T-cell (primary cell): ENCODE measurements at regions of chr17 and their contacts with region 1.

Region 1: GRCh38 chr17:42997984-42998938 is at the start of gene RPL27:
- DNase-seq: peak; percentile 94 to 100 (median 98)
- ATAC-seq: peak; percentile 94 to 97 (median 95)
- H3K4me3 ChIP-seq: peak within 1 kb of the TSS; percentile 72 to 80
- H3K4me3 Mint-ChIP-seq: peak within 1 kb of the TSS; percentile 90 to 97 (median 92)
- H3K27ac ChIP-seq: peak within 1 kb of the TSS; percentile 94
- H3K27ac Mint-ChIP-seq: peak within 1 kb of the TSS; percentile 88 to 98
- H3K4me1 ChIP-seq: peaks cover 3 to 27% of the 10 kb centered on the region in 2 experiments
- H3K4me1 Mint-ChIP-seq: peaks cover 24 to 30% (median 26%) of the 10 kb centered on the region in 3 donors
- H3K27me3 ChIP-seq: no peaks in the 10 kb centered on the region
- H3K27me3 Mint-ChIP-seq: no peaks in the 10 kb centered on the region
- total RNA-seq, gene RPL27: 1,254 to 1,790 (median 1,710) TPM

Region 2: GRCh38 chr17:42964161-42964932 is 33.9 kb before region 1 on chr17 and contains the start of gene AARSD1:
- CTCF ChIA-PET with region 1: interaction called in 1 of 2 experiments, 11 read pairs
- POLR2A ChIA-PET with region 1: no interaction called
- DNase-seq: peak; percentile 70 to 95 (median 87)
- ATAC-seq: peak; percentile 98 to 99 (median 99)
- H3K4me3 ChIP-seq: peak within 1 kb of the TSS; percentile 86 to 98
- H3K4me3 Mint-ChIP-seq: peak within 1 kb of the TSS; percentile 86 to 91 (median 90)
- H3K27ac ChIP-seq: peak within 1 kb of the TSS; percentile 73
- H3K27ac Mint-ChIP-seq: peak within 1 kb of the TSS; percentile 88 to 93
- H3K4me1 ChIP-seq: peaks cover 6 to 22% of the 10 kb centered on the region in 2 experiments
- H3K4me1 Mint-ChIP-seq: peaks cover 14 to 19% (median 16%) of the 10 kb centered on the region in 3 donors
- H3K27me3 ChIP-seq: peaks cover 0 to 2% of the 10 kb centered on the region in 2 experiments
- H3K27me3 Mint-ChIP-seq: no peaks in the 10 kb centered on the region
- total RNA-seq, gene AARSD1: 54.1 to 65.2 (median 60.0) TPM

Region 3: DNA sequence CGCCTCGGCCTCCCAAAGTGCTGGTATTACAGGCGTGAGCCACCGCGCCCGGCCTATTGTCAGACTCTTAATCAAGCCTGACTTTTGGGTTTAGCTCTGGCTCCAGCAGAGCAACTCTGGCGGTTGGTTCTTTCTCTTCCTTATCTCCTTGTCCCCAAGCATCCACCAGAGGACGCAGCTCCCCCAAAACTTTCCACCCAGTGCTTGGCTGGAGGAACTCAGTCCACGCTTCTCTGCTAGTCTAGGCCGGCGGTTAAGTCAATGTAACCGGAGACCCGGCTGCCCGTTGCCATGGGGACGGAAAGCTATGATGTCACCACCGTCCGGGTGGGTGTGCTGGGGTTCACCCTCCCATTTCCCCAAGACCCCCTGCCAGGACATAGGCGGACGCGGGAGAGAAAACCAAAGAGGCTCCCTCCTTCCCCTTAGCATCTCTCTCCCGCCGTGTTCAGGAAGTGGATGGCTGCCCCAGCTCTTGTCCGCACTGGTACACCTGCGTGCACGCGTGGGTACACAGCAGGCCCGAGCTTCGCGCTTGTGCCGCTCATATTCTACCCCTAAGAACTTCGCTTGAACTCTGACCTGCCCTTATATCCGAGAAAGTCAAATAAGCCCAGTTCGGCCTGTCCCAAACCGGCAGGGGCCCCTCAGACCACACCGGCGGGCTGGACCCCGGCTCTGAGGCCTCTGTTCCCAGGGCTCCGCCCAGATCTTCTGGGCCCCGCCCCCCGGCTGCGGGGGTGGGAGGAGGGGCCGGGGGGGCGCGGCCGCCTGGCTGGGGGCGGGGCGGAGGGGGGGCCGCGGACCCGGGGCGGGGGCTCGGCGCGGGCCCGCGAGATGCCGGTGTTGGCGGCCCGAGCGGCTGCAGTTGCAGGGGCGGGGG is 26.4 kb after region 1 on chr17 and contains the start of gene RND2:
- CTCF ChIA-PET with region 1: interaction called in 1 of 2 experiments, 12 read pairs
- POLR2A ChIA-PET with region 1: interaction called in 1 of 2 experiments, 7 read pairs
- DNase-seq: peak; percentile 52 to 85 (median 71)
- ATAC-seq: peak; percentile 59 to 73 (median 68)
- H3K4me3 ChIP-seq: peak within 1 kb of the TSS; percentile 76 to 84
- H3K4me3 Mint-ChIP-seq: peak within 1 kb of the TSS; percentile 86 to 95 (median 87)
- H3K27ac ChIP-seq: peak within 1 kb of the TSS; percentile 57
- H3K27ac Mint-ChIP-seq: peak within 1 kb of the TSS; percentile 80
- H3K4me1 ChIP-seq: peaks cover 5 to 53% of the 10 kb centered on the region in 2 experiments
- H3K4me1 Mint-ChIP-seq: peaks cover 23 to 34% (median 29%) of the 10 kb centered on the region in 3 donors
- H3K27me3 ChIP-seq: no peaks in the 10 kb centered on the region
- H3K27me3 Mint-ChIP-seq: no peaks in the 10 kb centered on the region
- total RNA-seq, gene RND2: 0.08 to 0.64 (median 0.32) TPM